Common myeloid progenitor, CD34-positive (primary cell): ENCODE measurements at regions of chr2 and their contacts with region 1.

Region 1: DNA sequence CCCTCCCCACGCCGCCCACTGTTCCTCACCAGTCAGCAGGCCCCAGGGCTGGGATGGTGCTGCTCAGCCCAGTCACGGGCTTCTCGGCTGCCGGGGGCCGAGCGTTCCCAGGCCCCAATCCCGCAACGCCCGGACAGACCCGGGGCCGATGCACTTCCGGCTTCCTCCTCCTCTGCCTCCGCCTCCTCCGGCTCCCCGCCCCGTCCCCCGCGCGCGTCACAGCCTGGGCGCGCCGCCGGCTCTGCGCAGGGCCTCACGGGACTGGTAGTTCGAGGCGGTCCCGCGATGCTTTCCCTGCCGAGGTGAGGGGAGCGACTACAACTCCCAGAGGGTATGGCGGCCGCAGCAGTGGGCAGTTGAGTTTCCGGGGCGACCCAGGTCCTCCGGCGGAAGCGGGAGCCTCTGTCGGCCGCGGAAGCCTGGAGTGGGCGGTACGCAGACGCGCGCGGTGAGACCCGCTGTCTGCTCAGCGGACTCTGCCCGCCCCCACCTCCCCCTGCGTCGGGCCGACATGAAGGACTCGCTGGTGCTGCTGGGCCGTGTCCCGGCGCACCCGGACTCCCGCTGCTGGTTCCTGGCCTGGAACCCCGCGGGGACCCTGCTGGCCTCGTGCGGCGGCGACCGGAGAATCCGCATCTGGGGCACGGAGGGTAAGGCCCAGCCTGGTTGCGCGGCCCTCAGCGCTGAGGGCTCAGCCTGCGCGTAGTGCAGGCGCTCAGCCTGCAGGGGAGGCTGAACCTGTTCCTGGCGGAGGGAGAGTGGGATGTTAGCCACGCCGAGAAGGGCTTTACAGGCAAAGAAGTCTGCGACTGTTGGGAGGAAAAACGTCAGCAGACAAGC is at the starts of genes CIAO1 and TMEM127:
- DNase-seq: peak; percentile 95 to 99 (median 98)
- H3K4me3 ChIP-seq: peak within 1 kb of the TSS; percentile 72 to 100 (median 94)
- H3K27ac ChIP-seq: peak within 1 kb of the TSS; percentile 78 to 90
- H3K4me1 ChIP-seq: peaks cover 9 to 36% (median 32%) of the 10 kb centered on the region in 4 experiments
- H3K27me3 ChIP-seq: no peaks in the 10 kb centered on the region

Region 2: DNA sequence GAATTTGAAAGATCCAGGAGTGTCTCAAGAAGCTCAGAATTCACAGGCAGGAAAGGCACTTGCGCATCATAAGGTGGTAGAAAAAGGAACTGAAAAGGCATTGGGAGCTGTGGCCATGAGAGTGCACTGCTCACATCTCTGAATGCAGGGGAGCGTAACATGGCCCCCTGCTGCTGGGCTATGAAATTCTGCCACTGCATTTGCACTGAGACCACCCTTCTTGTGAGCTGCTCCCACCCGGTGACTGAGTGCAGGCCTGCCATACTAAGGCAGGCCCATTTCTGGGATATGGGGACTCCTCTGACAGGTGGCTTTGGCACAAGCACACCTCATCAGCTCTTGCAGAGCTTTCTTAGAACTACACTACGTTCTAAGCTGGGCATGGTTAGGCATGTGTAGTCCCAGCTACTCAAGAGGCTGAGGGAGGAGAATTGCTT is 32.2 kb before region 1 on chr2:
- CTCF ChIA-PET with region 1: interaction called, 21 read pairs
- POLR2A ChIA-PET with region 1: no interaction called
- DNase-seq: peak; percentile 38 to 56 (median 44)
- H3K4me3 ChIP-seq: no peak overlapping the region
- H3K27ac ChIP-seq: no peak overlapping the region
- H3K4me1 ChIP-seq: peaks cover 0 to 11% (median 1%) of the 10 kb centered on the region in 4 experiments
- H3K27me3 ChIP-seq: no peaks in the 10 kb centered on the region

Region 3: GRCh38 chr2:96241900-96242611 is 24.0 kb before region 1 on chr2:
- CTCF ChIA-PET with region 1: interaction called, 23 read pairs
- POLR2A ChIA-PET with region 1: no interaction called
- DNase-seq: peak; percentile 64 to 80 (median 73)
- H3K4me3 ChIP-seq: peak overlapping the region in 3 of 7 experiments; percentile 21 to 39 (median 37)
- H3K27ac ChIP-seq: peak overlapping the region; percentile 41 to 76
- H3K4me1 ChIP-seq: peaks cover 8 to 33% (median 25%) of the 10 kb centered on the region in 4 experiments
- H3K27me3 ChIP-seq: no peaks in the 10 kb centered on the region

Region 4: DNA sequence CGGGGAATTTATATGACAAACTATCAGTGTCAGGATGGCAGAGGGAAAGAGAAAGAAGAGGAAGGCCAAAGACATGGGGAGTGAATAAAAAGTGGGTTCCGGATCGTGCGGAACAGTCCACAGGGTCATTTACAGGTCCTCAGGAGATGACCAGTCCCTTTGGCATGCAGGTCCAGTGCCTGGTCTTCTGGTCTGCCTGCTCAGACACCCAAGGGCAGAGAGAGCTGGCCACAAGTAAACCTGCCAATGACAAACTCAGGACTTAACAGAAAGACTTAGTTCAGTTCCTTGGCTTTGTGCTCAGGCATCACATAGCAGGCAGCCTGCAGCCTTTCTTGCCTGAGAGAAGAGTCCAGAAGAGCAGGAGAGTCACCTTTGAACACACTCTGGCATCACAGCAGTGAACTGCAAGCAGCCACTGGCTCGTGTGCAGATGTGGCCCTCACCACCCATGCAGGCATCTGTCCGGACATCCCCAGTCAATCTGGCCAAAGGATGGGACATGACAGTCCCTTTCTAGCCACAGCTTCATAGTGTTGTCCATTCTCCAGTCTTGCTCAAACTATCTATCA is 14.3 kb before region 1 on chr2:
- CTCF ChIA-PET with region 1: interaction called, 59 read pairs
- POLR2A ChIA-PET with region 1: no interaction called
- DNase-seq: peak in 1 of 3 donors; percentile 27
- H3K4me3 ChIP-seq: no peak overlapping the region
- H3K27ac ChIP-seq: peak overlapping the region in 1 of 2 experiments; percentile 7
- H3K4me1 ChIP-seq: peaks cover 10 to 48% (median 39%) of the 10 kb centered on the region in 4 experiments
- H3K27me3 ChIP-seq: no peaks in the 10 kb centered on the region

Region 5: GRCh38 chr2:96374211-96374951 is 108.3 kb after region 1 on chr2:
- CTCF ChIA-PET with region 1: no interaction called
- POLR2A ChIA-PET with region 1: no interaction called
- DNase-seq: peak; percentile 13 to 34 (median 29)
- H3K4me3 ChIP-seq: no peak overlapping the region
- H3K27ac ChIP-seq: no peak overlapping the region
- H3K4me1 ChIP-seq: no peaks in the 10 kb centered on the region
- H3K27me3 ChIP-seq: no peaks in the 10 kb centered on the region